ENCODE measurements at regions of chr3 and their contacts with region 1.

Region 1: GRCh38 chr3:189967254-189967865 is 153.3 kb downstream of the P3H2 start:
- DNase-seq: no peak
- ATAC-seq: peak in 1 of 2 donors; percentile 41
- H3K4me3 ChIP-seq: no peak overlapping the region
- H3K27ac ChIP-seq: no peak overlapping the region
- H3K4me1 ChIP-seq: no peaks in the 10 kb centered on the region
- H3K27me3 ChIP-seq: no peaks in the 10 kb centered on the region
- CTCF ChIP-seq: peak; percentile 57 to 86 (median 64)
- POLR2A ChIP-seq: no peak

Region 2: DNA sequence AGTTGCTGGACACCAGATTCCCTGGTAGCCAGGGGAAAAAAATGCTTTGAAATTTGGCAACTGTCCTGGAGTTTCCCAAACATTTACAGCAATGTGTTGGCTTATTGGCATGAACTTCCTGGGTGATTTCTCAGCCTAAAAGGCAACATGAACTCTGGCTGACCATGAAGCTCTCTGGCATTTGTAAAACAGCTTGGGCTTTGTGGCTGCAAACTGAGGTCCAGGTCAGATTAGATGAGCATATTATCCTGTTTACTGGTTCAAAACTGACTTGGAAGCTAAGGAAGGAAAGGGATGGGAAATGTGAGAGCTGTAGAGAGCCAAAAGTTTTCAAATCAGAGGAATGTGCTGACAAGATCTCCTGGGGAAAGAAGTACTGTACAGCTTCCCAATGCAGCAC is 14.3 kb after region 1 on chr3:
- in situ Hi-C with region 1: no loop called
- intact Hi-C with region 1: no loop called
- DNase-seq: peak in 1 of 2 donors; percentile 4
- ATAC-seq: peak; percentile 51 to 70
- H3K4me3 ChIP-seq: no peak overlapping the region
- H3K27ac ChIP-seq: peak overlapping the region in 1 of 4 donors; percentile 7
- H3K4me1 ChIP-seq: peaks cover 6 to 17% of the 10 kb centered on the region in 2 donors
- H3K27me3 ChIP-seq: no peaks in the 10 kb centered on the region
- CTCF ChIP-seq: no peak
- POLR2A ChIP-seq: no peak

Region 3: DNA sequence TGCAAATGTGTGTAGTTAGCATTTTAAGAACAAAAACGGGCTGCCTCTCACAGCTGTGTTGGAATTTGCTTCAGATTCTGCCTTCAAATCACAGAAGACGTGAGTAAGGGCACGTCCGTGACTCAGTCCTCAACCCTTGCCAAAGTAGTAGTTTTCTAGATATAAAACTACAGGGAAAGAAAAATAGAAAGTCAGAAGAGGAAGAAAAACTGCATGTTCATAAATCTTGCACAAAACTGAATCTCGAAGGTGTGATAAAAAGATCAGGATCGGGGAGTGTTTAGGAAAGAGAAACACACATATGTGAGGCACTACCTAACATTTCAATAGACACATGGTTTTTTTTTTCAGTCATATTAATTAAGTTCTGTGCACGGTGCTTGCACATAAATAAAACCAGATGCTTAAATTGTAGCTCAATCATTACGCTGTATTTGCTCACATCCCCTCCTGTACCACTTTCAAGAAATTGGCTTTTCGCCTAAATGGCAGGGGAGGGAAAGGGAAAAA is 81.6 kb after region 1 on chr3:
- in situ Hi-C with region 1: no loop called
- intact Hi-C with region 1: no loop called
- DNase-seq: no peak
- ATAC-seq: no peak
- H3K4me3 ChIP-seq: no peak overlapping the region
- H3K27ac ChIP-seq: no peak overlapping the region
- H3K4me1 ChIP-seq: peaks cover 0 to 5% of the 10 kb centered on the region in 2 donors
- H3K27me3 ChIP-seq: no peaks in the 10 kb centered on the region
- CTCF ChIP-seq: no peak
- POLR2A ChIP-seq: no peak

Region 4: GRCh38 chr3:190089711-190090110 is 122.4 kb after region 1 on chr3:
- in situ Hi-C with region 1: no loop called
- intact Hi-C with region 1: no loop called
- DNase-seq: no peak
- ATAC-seq: no peak
- H3K4me3 ChIP-seq: no peak overlapping the region
- H3K27ac ChIP-seq: no peak overlapping the region
- H3K4me1 ChIP-seq: no peaks in the 10 kb centered on the region
- H3K27me3 ChIP-seq: no peaks in the 10 kb centered on the region
- CTCF ChIP-seq: no peak
- POLR2A ChIP-seq: no peak

Region 5: DNA sequence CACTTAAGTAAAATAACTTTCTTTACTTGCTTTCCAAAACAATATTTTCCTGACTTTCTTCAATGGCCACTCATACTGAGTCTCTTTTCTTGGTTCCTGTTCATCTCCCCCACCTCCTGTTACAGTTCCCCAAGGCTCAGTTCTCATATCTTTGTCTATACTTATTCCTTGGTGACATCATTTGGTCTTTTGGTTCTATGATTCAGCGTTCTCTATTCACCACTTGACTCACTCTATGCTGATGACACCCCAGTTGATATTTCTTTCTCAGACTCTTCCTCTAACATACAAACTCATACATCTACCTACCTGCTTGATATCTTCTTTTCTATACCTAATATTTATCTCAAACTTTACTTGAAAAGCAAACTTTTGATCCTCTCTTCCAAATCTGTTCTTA is 238.4 kb after region 1 on chr3:
- in situ Hi-C with region 1: loop called in 2 of 4 experiments (anchors 5 to 10 kb)
- intact Hi-C with region 1: loop called (anchors 1 kb)
- DNase-seq: no peak
- ATAC-seq: no peak
- H3K4me3 ChIP-seq: no peak overlapping the region
- H3K27ac ChIP-seq: no peak overlapping the region
- H3K4me1 ChIP-seq: no peaks in the 10 kb centered on the region
- H3K27me3 ChIP-seq: no peaks in the 10 kb centered on the region
- CTCF ChIP-seq: no peak
- POLR2A ChIP-seq: no peak